Heart right ventricle (tissue), 16 donors: ENCODE measurements at regions of chr7 and their contacts with region 1.

Region 1: GRCh38 chr7:153457746-153458145 is 594.5 kb upstream of the DPP6 start:
- DNase-seq: no peak
- ATAC-seq: no peak
- H3K4me3 ChIP-seq: no peak overlapping the region
- H3K27ac ChIP-seq: no peak overlapping the region
- H3K4me1 ChIP-seq: no peaks in the 10 kb centered on the region
- H3K27me3 ChIP-seq: peaks cover 0 to 8% (median 3%) of the 10 kb centered on the region in 7 donors
- CTCF ChIP-seq: no peak

Region 2: DNA sequence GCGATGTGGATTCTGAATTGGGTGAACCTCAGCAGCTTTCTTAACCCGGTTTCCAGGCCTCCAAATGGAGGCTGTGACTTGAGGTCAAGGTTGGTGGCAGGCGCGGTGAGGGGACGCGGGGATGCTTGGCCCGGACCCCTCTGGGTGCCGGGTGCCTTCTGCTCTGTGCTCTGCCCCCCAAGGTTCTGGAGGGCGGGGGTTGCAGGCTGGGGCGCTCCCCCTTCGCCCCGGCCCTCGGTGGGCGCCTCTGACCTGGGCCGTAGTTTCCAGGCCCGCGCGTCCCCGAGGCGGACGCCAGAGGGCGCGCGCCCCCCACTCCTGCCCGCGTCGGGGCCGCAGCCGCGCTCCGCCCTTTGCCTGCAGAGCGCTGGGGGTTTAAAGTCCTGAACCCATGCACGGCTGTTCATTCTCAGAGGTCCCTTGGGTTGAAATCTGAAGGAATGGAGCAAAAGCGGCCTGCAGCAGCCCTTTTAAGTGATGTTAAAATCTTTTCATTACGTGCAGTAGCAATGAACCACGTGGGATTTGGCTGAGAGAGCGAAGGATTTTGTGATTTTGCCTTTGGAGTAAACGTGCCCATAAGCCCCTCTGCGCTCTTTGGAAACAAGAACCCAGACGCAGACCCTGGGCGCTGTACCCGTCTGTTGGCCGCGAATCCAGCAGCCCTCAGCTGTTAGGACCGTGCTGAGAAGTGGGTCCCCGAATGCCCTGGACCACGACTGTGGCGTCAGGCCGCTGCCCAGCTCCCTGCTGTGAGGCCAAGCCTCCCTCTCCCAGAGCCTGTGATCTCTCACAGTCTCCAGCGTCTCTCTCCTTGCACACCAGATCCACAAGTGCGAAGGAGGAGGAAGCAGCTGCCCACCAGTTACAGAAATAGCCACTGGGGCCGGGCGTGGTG is 563.2 kb before region 1 on chr7:
- intact Hi-C with region 1: no loop called
- DNase-seq: no peak
- ATAC-seq: peak in 5 of 8 donors; percentile 35 to 73 (median 58)
- H3K4me3 ChIP-seq: no peak overlapping the region
- H3K27ac ChIP-seq: no peak overlapping the region
- H3K4me1 ChIP-seq: peaks cover 0 to 4% (median 0%) of the 10 kb centered on the region in 9 donors
- H3K27me3 ChIP-seq: peaks cover 0 to 24% (median 8%) of the 10 kb centered on the region in 7 donors
- CTCF ChIP-seq: peak; percentile 60 to 84 (median 77)

Region 3: DNA sequence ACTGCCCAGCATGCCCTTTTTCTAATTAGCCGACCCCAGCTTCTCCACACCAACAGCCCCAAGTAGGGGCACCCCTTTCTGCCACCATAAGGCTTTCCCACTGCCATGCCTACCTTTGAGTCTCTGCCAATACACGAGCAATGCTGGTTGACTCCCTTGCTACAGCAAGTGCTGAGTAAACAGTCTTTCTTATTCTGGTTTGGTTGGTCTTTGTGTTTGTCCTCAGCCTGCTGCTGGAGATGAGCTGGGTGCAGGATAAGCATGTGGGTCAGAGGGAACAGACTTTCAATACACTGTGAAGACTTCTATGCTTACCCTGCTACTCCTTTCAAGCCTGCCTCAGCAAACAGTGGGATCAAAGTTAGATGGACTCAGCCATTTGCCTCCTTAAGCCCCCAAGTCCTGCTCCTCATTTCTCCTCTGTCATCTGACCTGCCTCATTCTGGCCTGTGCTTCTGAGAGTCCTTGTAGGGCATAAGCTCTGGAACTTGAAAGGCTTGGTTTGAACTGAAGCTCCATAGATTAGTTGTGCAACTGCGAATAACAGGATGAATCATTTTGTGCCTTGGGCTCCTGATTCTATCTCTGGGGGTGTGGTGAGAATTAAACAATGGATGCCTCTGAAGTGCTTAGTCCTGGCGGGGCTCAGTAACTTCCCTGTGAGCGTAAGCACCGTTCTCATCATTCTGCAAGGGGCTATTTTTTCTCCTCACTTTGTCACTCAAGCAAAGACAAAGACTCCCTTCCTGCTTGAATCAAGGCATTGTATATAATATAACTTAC is 60.6 kb after region 1 on chr7:
- intact Hi-C with region 1: loop called in 1 of 10 experiments (anchors 10 kb)
- DNase-seq: no peak
- ATAC-seq: no peak
- H3K4me3 ChIP-seq: no peak overlapping the region
- H3K27ac ChIP-seq: no peak overlapping the region
- H3K4me1 ChIP-seq: peaks cover 0 to 13% (median 0%) of the 10 kb centered on the region in 9 donors
- H3K27me3 ChIP-seq: no peaks in the 10 kb centered on the region
- CTCF ChIP-seq: no peak